Posterior vena cava (tissue), 2 donors: ENCODE measurements at regions of chr5 and their contacts with region 1.

Region 1: GRCh38 chr5:178454821-178455477 is 135.2 kb downstream of the COL23A1 start:
- DNase-seq: no peak

Region 2: GRCh38 chr5:177982072-177982727 is 472.7 kb before region 1 on chr5:
- intact Hi-C with region 1: no loop called
- DNase-seq: no peak

Region 3: GRCh38 chr5:180343831-180344327 is 1888.9 kb after region 1 on chr5:
- intact Hi-C with region 1: loop called in 1 of 2 experiments (anchors 5 kb)
- DNase-seq: peak; percentile 82